Activated T-helper 2 cell treated with anti-CD3 and anti-CD28 coated beads, Interferon-gamma antibody, Interleukin-2, Interleukin-4, amounts not matched to agents 10 μg/mL and 5 μg/mL and 100 μg/mL, durations not matched to agents 14 hours and 24 hours and 36 hours (primary cell): ENCODE measurements at regions of chr16 and their contacts with region 1.

Region 1: GRCh38 chr16:53945996-53946395 is 242.0 kb downstream of the FTO start:
- DNase-seq: no peak
- H3K4me3 Mint-ChIP-seq: no peak overlapping the region
- H3K27ac Mint-ChIP-seq: no peak overlapping the region
- H3K4me1 Mint-ChIP-seq: peaks cover 23% of the 10 kb centered on the region
- H3K27me3 Mint-ChIP-seq: no peaks in the 10 kb centered on the region

Region 2: DNA sequence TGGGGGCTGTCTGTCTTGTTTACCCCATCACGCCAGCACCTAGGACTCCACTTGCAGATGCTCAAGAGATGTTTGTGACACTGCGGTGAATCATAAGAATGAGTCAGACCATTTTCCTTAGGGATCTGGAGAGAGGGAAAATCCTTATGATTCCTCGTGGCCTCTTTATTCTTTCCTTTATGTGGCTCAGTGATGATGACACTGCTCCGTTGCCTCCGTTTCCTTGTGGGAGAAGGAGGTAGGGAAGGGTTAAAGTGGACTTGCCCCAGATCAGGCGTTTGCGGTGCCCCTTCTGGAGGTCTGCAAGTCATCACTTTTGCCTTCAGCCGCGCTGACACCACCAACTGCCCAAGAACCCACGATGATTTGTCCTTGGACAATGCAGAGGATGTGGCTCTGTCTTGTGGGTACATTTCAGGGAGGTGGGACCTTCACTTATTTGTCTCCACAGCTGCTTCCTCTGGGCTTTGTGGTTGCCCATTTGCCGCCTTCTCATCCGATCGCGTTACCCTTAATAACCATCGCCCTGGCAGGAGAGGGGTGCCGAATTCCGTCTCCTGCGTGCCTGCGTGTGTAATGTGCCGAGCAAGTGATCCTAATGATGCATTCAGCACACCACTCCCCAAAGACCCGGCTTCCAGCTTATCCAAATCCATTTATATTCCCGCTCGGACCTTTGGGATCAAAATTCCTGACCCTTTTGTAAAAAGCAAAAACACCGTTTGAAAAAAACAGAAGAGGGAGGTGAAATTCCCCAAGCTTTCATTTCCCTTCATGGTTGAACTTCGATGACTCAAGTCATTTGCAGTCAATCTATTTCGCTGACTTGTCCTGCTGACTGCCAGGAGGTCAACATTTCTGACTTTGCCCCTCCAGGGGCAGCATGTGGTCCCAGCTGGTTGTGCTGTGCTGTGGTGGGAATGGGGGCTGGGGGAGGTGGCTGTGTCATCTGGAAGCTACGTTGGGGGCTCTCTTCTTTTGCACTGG is 427.8 kb after region 1 on chr16:
- intact Hi-C with region 1: loop called (anchors 5 kb)
- DNase-seq: no peak
- H3K4me3 Mint-ChIP-seq: no peak overlapping the region
- H3K27ac Mint-ChIP-seq: no peak overlapping the region
- H3K4me1 Mint-ChIP-seq: peaks cover 6% of the 10 kb centered on the region
- H3K27me3 Mint-ChIP-seq: peaks cover 32% of the 10 kb centered on the region